PC-9 (cell line): ENCODE measurements at regions of chr17 and their contacts with region 1.

Region 1: GRCh38 chr17:50956750-50957523 is 90.8 kb upstream of the TOB1 start:
- DNase-seq: peak; percentile 39 to 58
- H3K4me3 ChIP-seq: no peak overlapping the region
- H3K27ac ChIP-seq: no peak overlapping the region
- H3K4me1 ChIP-seq: peaks cover 13% of the 10 kb centered on the region
- H3K27me3 ChIP-seq: no peaks in the 10 kb centered on the region
- CTCF ChIP-seq: peak; percentile 84

Region 2: DNA sequence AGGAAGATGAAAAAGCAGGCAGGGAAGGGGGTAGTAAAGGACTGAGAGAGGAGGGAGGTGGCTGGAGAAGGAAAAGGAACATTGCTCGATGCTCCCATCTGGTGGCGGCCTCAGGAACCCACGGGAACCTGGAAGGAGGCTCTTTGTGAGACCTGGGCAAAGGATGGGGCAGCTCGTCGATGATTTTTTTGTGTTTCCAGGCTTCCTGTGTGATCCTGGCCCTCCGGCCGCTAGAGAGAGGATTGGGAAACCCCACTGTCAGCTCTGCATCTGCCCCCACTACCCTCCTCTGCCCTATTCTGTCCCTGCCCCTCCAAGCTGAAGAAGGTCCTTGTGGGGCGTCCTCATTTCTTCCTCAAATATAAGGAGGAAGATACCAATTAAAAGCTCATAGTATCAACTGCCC is 115.0 kb before region 1 on chr17:
- CTCF ChIA-PET with region 1: interaction called, 6 read pairs
- POLR2A ChIA-PET with region 1: no interaction called
- intact Hi-C with region 1: loop called (anchors 2 kb)
- DNase-seq: peak; percentile 43 to 76
- H3K4me3 ChIP-seq: no peak overlapping the region
- H3K27ac ChIP-seq: no peak overlapping the region
- H3K4me1 ChIP-seq: peaks cover 18% of the 10 kb centered on the region
- H3K27me3 ChIP-seq: no peaks in the 10 kb centered on the region
- CTCF ChIP-seq: peak; percentile 83